ENCODE measurements at regions of chrX and their contacts with region 1.

Region 1: GRCh38 chrX:44872817-44873414 is at the start of gene KDM6A:
- DNase-seq: peak; percentile 98
- H3K4me3 Mint-ChIP-seq: peak within 1 kb of the TSS; percentile 91
- H3K27ac Mint-ChIP-seq: peak within 1 kb of the TSS; percentile 92
- H3K4me1 Mint-ChIP-seq: peaks cover 6% of the 10 kb centered on the region
- H3K27me3 Mint-ChIP-seq: no peaks in the 10 kb centered on the region
- CTCF ChIP-seq: no peak
- total RNA-seq, gene KDM6A: 30.8 and 31.8 TPM in 2 replicates

Region 2: DNA sequence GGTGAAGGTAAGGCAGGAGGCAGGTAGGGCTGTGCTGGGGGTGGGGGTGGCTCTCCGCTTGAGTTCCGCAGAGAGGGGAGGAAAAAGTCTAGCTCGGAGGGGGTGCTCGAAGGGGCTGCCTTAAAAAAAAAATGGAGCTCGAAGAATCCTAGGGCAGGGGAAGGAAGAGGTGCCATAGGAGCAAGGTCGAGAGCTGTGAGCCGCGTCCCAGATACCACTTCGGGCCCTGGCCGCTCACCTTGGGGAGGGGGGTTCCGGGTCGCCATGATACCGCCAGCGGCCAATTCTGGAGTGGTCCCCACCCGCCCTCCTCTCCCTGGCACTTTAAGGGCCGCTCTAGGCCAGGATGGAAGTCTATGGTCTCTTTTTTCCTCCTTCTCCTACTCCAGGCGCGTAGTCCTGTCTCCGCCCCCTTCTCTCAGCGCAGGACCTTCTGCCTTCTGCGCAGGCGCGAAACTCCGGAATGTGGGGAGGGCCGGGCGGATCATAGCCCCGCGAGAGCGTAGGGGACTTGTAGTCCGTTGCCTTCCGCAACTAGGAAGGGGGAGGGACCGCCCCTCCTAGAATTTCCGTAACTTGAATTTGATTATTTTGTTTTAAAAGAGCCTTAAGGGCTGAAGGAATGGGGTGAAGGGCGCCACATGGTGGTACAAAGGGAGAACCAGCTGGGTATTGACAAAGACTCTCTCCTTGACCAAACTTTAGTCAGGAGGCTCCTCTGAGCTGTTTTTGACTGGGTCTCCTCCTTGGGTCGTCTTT is 330.2 kb before region 1 on chrX and contains the start of gene FUNDC1:
- CTCF ChIA-PET with region 1: interaction called, 3 read pairs
- POLR2A ChIA-PET with region 1: interaction called, 16 read pairs
- intact Hi-C with region 1: loop called (anchors 2 kb)
- DNase-seq: peak; percentile 93
- H3K4me3 Mint-ChIP-seq: peak within 1 kb of the TSS; percentile 92
- H3K27ac Mint-ChIP-seq: peak within 1 kb of the TSS; percentile 98
- H3K4me1 Mint-ChIP-seq: peaks cover 8% of the 10 kb centered on the region
- H3K27me3 Mint-ChIP-seq: peaks cover 68% of the 10 kb centered on the region
- CTCF ChIP-seq: no peak
- total RNA-seq, gene FUNDC1: 14.7 and 20.2 TPM in 2 replicates

Region 3: GRCh38 chrX:44675362-44676024 is 197.4 kb before region 1 on chrX:
- CTCF ChIA-PET with region 1: no interaction called
- POLR2A ChIA-PET with region 1: interaction called, 5 read pairs
- intact Hi-C with region 1: loop called (anchors 5 kb)
- DNase-seq: peak; percentile 97
- H3K4me3 Mint-ChIP-seq: peak overlapping the region; percentile 4
- H3K27ac Mint-ChIP-seq: peak overlapping the region; percentile 4
- H3K4me1 Mint-ChIP-seq: peaks cover 12% of the 10 kb centered on the region
- H3K27me3 Mint-ChIP-seq: peaks cover 27% of the 10 kb centered on the region
- CTCF ChIP-seq: no peak

Region 4: GRCh38 chrX:44817029-44817428 is 55.9 kb before region 1 on chrX:
- CTCF ChIA-PET with region 1: no interaction called
- POLR2A ChIA-PET with region 1: no interaction called
- intact Hi-C with region 1: no loop called
- DNase-seq: no peak
- H3K4me3 Mint-ChIP-seq: no peak overlapping the region
- H3K27ac Mint-ChIP-seq: no peak overlapping the region
- H3K4me1 Mint-ChIP-seq: no peaks in the 10 kb centered on the region
- H3K27me3 Mint-ChIP-seq: peaks cover 47% of the 10 kb centered on the region
- CTCF ChIP-seq: no peak

Region 5: GRCh38 chrX:44889824-44890223 is 16.9 kb after region 1 on chrX:
- CTCF ChIA-PET with region 1: no interaction called
- POLR2A ChIA-PET with region 1: no interaction called
- intact Hi-C with region 1: no loop called
- DNase-seq: no peak
- H3K4me3 Mint-ChIP-seq: no peak overlapping the region
- H3K27ac Mint-ChIP-seq: no peak overlapping the region
- H3K4me1 Mint-ChIP-seq: peaks cover 8% of the 10 kb centered on the region
- H3K27me3 Mint-ChIP-seq: no peaks in the 10 kb centered on the region
- CTCF ChIP-seq: no peak

Region 6: GRCh38 chrX:44974422-44974821 is 101.5 kb after region 1 on chrX:
- CTCF ChIA-PET with region 1: interaction called, 4 read pairs
- POLR2A ChIA-PET with region 1: interaction called, 11 read pairs
- intact Hi-C with region 1: no loop called
- DNase-seq: peak; percentile 46
- H3K4me3 Mint-ChIP-seq: peak overlapping the region; percentile 61
- H3K27ac Mint-ChIP-seq: peak overlapping the region; percentile 84
- H3K4me1 Mint-ChIP-seq: peaks cover 15% of the 10 kb centered on the region
- H3K27me3 Mint-ChIP-seq: no peaks in the 10 kb centered on the region
- CTCF ChIP-seq: no peak

Region 7: GRCh38 chrX:45070116-45071007 is 197.4 kb after region 1 on chrX:
- CTCF ChIA-PET with region 1: interaction called, 4 read pairs
- POLR2A ChIA-PET with region 1: interaction called, 56 read pairs
- intact Hi-C with region 1: loop called (anchors 1 kb)
- DNase-seq: peak; percentile 68
- H3K4me3 Mint-ChIP-seq: no peak overlapping the region
- H3K27ac Mint-ChIP-seq: no peak overlapping the region
- H3K4me1 Mint-ChIP-seq: peaks cover 14% of the 10 kb centered on the region
- H3K27me3 Mint-ChIP-seq: no peaks in the 10 kb centered on the region
- CTCF ChIP-seq: peak; percentile 64

Region 8: GRCh38 chrX:45186643-45187026 is 313.7 kb after region 1 on chrX:
- CTCF ChIA-PET with region 1: no interaction called
- POLR2A ChIA-PET with region 1: no interaction called
- intact Hi-C with region 1: loop called (anchors 2 kb)
- DNase-seq: no peak
- H3K4me3 Mint-ChIP-seq: peak overlapping the region; percentile 72
- H3K27ac Mint-ChIP-seq: no peak overlapping the region
- H3K4me1 Mint-ChIP-seq: peaks cover 6% of the 10 kb centered on the region
- H3K27me3 Mint-ChIP-seq: peaks cover 65% of the 10 kb centered on the region
- CTCF ChIP-seq: no peak